ENCODE measurements at regions of chr6 and their contacts with region 1.

Region 1: DNA sequence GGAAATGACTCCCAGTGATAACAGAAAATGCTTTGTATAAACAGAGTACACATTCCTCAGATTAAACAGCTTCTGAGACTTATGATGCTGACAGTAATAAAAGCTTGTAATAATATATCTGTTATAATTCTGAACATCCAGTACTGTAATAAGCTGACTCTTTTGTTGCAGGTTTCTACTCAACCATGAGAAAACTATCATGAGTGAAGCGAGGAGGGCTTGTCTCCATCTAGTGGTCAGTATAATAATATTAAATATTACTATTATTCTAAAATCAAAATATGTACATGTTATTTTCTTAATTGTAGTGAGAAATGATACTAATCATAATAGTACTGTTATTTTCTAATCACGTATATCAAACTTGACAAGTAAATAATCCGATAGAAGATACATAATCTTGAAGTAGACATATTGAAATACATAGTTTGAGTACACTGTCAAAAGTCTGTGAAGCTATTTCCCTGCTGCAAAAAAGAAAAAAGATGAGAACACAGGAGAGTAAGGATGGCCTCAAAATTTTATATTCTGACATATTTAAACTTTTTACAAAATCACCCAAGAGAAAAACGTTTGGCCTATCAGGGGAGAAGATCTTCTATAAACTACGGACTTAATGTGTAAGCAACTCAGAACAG is 183.1 kb downstream of the MOXD1 start:
- DNase-seq: peak; percentile 10
- H3K27ac ChIP-seq: no peak overlapping the region
- CTCF ChIP-seq: peak; percentile 54

Region 2: GRCh38 chr6:131924881-131925474 is 293.2 kb before region 1 on chr6:
- CTCF ChIA-PET with region 1: interaction called, 25 read pairs
- POLR2A ChIA-PET with region 1: no interaction called
- DNase-seq: peak; percentile 34
- H3K27ac ChIP-seq: no peak overlapping the region
- CTCF ChIP-seq: peak; percentile 65

Region 3: DNA sequence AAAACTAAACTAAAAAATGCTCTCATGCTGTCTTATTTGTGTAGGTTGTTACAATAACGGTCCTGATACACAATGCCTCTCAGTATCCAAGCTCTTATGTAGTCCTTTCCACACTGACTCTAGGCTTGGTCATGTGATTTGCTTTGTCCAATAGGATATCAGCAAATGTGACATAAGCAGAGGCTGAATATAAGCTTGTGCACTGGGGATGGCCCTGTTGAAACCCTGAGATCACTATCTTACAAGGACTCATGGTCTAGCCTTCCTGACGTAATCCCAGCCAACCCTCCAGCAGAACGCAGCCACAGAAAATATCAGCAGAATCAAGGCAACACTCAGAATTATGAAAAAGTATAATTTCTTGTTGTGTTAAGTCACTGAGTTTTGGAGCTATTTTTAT is 121.9 kb before region 1 on chr6:
- CTCF ChIA-PET with region 1: interaction called, 10 read pairs
- POLR2A ChIA-PET with region 1: no interaction called
- DNase-seq: no peak
- H3K27ac ChIP-seq: no peak overlapping the region
- CTCF ChIP-seq: no peak

Measured in RWPE1 (cell line).